Vagina (tissue), 2 donors: ENCODE measurements at regions of chr1 and their contacts with region 1.

Region 1: DNA sequence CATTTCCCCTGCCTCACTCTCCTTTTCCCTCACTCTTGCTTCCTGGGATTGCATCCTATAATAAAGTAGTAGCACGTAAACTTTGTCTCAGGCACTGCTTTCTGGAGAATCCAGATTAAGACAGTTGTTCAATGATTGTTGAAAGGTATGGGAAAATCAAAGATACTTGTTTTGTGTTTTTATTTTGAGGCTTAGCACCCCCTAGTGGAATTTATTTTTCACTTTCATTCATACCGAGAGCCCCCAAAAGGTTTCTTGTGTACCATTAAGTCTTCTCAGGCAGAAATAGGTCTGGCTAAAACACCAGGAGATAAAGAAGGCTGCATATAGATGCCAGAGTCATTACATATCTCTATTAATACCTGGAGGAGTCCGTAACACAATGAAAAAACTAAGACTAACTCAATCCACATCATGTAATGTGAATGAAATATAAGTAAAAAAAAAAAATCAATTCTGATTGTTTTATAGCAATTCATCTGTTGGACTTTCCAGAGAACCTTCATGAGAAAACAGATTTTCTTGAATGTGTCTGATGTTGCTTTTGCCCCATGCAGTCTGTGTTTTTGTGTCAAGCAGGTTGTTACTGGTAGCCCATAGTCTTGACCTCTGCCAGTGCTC is 103.5 kb downstream of the RPE65 start:
- DNase-seq: no peak
- H3K4me3 ChIP-seq: no peak overlapping the region
- H3K27ac ChIP-seq: no peak overlapping the region
- H3K4me1 ChIP-seq: no peaks in the 10 kb centered on the region
- H3K27me3 ChIP-seq: no peaks in the 10 kb centered on the region
- CTCF ChIP-seq: peak in 2 of 3 experiments; percentile 30 to 46
- POLR2A ChIP-seq: no peak

Region 2: DNA sequence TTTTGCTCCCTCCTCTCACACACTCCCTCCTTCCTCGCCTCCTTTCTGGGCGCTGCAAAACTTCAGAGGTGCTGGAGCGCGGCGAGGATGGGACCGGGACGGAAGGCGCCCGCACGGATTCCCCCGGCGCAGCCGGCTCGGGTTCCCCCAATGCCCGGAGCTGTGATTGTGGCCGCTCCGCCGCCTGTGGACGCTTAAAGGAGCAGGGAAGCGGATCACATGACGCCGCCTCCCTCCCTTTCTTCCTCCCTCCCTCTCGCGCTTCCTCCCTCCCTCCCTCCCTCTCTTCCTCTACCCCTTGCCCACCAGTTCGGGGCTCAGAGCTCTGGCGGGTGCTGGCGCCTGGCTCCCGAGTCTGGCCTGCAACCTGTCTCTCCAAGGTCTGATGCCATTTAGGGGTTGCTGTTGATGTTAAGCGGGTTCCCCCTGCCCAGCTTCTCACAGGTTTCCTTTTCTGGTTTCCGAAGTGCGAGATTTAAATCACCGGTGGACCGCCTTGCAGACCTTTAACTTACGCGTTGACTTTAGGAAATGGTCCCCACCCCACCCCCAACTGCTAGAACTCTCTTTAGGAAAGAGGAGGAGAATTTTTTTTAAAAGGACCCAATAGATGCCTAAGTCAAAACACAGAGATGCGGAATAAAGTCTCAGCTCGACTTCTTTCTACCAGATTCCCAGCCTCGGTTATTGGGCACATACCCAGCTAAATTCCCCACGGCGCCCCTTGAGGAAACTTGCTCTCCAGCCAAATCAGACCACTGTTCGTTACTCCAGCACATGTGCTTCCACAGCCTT is 113.7 kb before region 1 on chr1 and contains the start of gene WLS:
- intact Hi-C with region 1: loop called (anchors 10 kb)
- DNase-seq: peak in 1 of 2 donors; percentile 93
- H3K4me3 ChIP-seq: peak within 1 kb of the TSS; percentile 73 to 87
- H3K27ac ChIP-seq: peak within 1 kb of the TSS; percentile 88
- H3K4me1 ChIP-seq: peaks cover 32% of the 10 kb centered on the region
- H3K27me3 ChIP-seq: no peaks in the 10 kb centered on the region
- CTCF ChIP-seq: no peak
- POLR2A ChIP-seq: peak in 1 of 2 donors; percentile 81
- total RNA-seq, gene WLS: 68.0 TPM